ENCODE measurements at regions of chr9 and their contacts with region 1.

Region 1: DNA sequence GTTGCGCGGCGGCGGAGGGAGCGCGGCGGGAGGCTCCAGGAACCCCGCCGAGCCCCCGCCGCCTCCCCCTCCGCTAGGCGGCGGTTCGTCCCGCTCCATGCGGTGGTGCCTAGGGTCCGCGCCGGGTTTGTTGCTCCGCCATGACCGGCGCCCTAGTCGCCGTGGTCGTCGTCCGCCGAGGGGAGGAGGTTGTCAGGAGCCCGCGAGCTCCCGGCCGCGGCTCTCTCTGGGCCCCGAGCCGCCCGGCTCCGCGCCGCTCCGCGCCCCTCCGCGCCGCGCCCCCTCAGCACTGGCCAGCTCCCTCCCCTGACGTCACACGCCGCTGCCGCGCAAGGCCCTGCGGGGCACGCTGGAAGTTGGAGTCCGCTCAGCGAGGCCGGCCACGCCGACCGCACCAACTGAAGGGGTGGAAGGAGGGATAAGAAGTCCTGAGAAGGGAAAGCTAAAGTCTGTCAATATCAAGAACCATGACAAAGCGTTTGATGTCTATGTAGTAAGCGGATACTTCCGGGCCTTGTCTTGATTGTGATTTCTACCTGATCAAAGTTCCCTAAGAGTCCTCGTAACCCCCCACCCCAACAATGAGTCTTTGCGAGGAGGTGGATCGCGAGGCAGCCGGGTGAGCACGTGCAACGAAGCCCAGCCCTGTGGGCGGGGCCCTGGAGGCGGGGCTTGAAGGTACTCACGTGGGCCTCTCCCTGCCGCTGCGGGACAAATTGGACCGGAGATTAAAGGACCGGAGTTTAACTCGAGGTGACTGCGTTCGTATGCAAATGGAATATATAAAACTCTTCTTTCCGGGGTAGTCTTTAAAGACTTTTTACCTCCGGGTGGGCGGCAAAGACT is at the start of gene NR6A1:
- DNase-seq: peak; percentile 84 to 95 (median 90)
- ATAC-seq: peak; percentile 88 to 91
- H3K4me3 Mint-ChIP-seq: peak within 1 kb of the TSS; percentile 84 to 94 (median 91)
- H3K27ac Mint-ChIP-seq: peak within 1 kb of the TSS; percentile 40 to 88 (median 76)
- H3K4me1 Mint-ChIP-seq: peaks cover 23 to 46% (median 39%) of the 10 kb centered on the region in 4 donors
- H3K27me3 Mint-ChIP-seq: peaks cover 57 to 87% (median 62%) of the 10 kb centered on the region in 5 donors
- polyA plus RNA-seq, gene NR6A1: not detected

Region 2: DNA sequence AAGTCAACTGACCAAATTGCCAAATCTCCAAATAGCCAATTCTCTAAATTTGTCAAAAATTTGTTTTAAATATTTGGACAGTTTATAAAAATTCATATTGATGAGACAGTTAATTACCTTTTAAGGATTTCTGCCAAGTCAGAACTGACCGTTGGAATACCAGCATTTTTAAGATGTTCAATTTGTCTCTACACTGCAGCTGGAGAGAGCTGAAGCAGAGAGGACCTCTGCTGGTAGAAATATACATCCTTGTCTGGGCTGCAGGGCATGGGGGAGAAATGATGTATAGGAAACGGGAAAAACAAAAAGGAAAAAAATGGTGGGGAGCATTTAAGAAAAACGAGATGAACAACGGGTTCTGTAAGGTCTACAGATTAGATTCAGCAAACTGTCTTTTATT is 17.0 kb before region 1 on chr9:
- POLR2A ChIA-PET with region 1: no interaction called
- DNase-seq: no peak
- ATAC-seq: no peak
- H3K4me3 Mint-ChIP-seq: no peak overlapping the region
- H3K27ac Mint-ChIP-seq: no peak overlapping the region
- H3K4me1 Mint-ChIP-seq: peaks cover 0 to 6% (median 0%) of the 10 kb centered on the region in 4 donors
- H3K27me3 Mint-ChIP-seq: peaks cover 36 to 89% (median 62%) of the 10 kb centered on the region in 5 donors

Region 3: DNA sequence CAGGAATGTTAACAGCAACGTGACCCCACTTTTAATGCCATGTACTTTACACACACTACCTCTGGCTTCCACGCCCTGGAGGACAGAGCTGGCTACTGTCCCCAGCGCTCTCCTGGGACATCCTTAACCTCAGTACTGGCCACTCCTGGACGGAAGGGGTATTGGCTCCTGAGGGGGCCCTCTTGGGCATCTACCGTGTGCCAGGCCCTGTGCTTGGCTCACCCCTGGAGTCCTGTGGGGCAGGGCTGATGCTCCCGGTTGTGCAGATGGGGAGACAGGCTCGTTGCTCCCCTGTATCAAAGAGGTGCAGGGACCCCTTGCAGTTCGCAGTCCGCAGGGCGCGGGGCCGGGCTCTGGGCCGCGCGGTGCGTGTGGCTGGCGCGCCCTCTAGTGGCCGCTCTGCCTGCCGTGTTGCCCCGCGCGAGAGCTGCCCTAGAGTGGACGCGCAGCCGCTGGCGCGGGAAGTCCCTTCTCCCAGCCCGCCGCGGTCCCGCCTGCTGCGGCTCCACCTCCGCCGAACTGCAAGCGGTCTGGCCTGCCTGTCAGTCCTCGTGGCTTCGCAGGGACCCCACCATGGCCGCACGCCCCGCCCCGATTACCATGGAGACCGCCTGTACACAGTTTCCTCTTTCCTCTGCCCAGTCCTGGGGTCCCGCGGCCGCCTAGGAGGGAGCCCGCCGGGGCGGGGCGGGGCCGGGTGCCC is 81.7 kb after region 1 on chr9 and contains the start of gene WDR38:
- POLR2A ChIA-PET with region 1: interaction called, 11 read pairs
- DNase-seq: peak; percentile 68 to 85 (median 77)
- ATAC-seq: peak; percentile 81 to 85
- H3K4me3 Mint-ChIP-seq: peak within 1 kb of the TSS; percentile 54 to 77 (median 67)
- H3K27ac Mint-ChIP-seq: peak within 1 kb of the TSS in 6 of 10 donors; percentile 43 to 87 (median 66)
- H3K4me1 Mint-ChIP-seq: peaks cover 7 to 16% (median 12%) of the 10 kb centered on the region in 4 donors
- H3K27me3 Mint-ChIP-seq: peaks cover 0 to 16% (median 11%) of the 10 kb centered on the region in 5 donors
- polyA plus RNA-seq, gene WDR38: not detected

Region 4: DNA sequence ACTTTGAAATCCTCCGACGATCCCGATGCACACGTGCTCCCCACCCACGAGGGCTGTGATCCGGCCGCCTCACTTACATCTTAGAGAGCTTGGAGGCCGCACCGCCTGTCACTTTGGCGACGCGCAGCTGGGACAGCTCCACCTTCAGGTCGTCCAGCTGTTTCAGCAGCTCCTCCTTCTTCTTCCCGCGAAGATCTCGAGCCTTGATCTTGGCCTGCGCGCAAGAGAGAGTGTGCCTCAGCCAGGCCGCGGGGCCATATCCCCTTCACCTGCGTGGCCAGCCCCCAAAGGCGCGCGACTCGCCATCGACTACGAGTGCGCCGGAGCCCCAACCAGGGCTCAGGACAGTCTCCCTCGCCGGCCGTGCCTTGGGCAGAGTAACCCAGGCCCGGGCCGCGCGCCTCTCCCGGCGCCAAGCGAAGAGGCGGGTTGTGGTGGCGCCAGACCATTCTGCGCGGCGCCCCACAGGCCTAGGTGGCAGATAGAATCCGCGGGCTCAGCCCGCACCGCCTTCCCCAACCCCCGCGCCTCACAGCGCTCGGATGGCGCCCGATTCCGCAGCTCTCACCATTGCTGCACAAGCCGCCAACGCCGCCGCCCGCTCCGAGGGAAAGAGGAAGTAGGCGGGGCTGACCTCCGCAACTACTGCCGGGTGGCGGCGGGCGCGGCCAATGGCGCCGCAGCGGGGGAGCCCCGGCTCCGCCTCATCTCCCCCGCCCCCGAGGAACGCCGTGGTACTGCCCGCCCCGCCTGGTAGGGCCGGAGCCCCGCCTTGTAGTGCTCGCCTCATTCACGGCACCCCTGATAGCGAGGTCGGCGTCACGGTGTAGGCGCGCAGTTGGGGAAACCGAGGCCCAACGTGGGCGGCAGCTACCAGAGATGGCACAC is 90.3 kb after region 1 on chr9 and contains the starts of genes ARPC5L and RPL35:
- POLR2A ChIA-PET with region 1: interaction called, 25 read pairs
- DNase-seq: peak; percentile 91 to 97 (median 95)
- ATAC-seq: peak; percentile 94
- H3K4me3 Mint-ChIP-seq: peak within 1 kb of the TSS; percentile 89 to 99 (median 94)
- H3K27ac Mint-ChIP-seq: peak within 1 kb of the TSS; percentile 72 to 99 (median 98)
- H3K4me1 Mint-ChIP-seq: peaks cover 14 to 34% (median 32%) of the 10 kb centered on the region in 4 donors
- H3K27me3 Mint-ChIP-seq: no peaks in the 10 kb centered on the region
- polyA plus RNA-seq, gene ARPC5L: 37.5 to 70.4 (median 43.1) TPM
- polyA plus RNA-seq, gene RPL35: 1,999 to 2,475 (median 2,297) TPM

Region 5: GRCh38 chr9:124868511-124869465 is 97.5 kb after region 1 on chr9:
- POLR2A ChIA-PET with region 1: interaction called, 11 read pairs
- DNase-seq: peak; percentile 84 to 92 (median 90)
- ATAC-seq: peak; percentile 82 to 86
- H3K4me3 Mint-ChIP-seq: peak overlapping the region; percentile 84 to 95 (median 91)
- H3K27ac Mint-ChIP-seq: peak overlapping the region; percentile 83 to 98 (median 89)
- H3K4me1 Mint-ChIP-seq: peaks cover 20 to 62% (median 47%) of the 10 kb centered on the region in 4 donors
- H3K27me3 Mint-ChIP-seq: no peaks in the 10 kb centered on the region

Region 6: DNA sequence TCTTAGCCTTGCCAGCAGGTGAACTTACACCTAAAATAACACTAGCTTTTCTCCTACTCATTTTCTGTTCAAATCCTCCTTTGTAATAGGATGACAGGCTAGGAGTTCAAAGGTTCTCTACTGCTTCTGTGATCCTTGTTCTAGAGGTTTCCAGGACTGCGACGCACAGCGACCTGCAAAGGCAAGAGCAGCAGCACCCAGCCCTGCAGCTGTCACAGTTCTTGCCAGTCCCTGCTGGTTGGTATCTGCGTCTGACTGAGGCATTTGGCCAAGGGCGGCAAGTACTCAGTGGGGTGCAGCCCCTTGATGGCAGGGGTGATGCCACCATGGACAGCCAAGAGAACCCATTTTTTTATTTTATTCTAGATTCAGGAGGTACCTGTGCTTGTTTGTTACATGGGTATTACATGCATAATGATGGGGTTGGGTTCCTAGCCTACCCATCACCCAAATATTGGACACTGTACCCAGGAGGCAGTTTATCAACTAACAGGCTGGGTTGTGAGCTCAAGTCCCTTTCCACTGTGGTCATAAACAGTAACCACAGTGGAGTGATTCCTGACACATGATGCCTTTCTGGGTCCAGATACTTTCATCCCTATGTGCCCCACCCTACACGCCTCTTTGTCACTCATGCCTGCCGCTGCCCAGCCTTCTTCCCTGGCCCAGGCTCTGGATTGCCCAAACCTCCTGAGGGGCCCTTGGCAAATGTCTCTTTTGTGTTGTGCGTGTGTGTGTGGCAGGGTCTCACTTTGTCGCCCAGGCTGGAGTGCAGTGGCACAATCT is 601.4 kb after region 1 on chr9:
- POLR2A ChIA-PET with region 1: interaction called, 10 read pairs
- DNase-seq: no peak
- ATAC-seq: no peak
- H3K4me3 Mint-ChIP-seq: no peak overlapping the region
- H3K27ac Mint-ChIP-seq: no peak overlapping the region
- H3K4me1 Mint-ChIP-seq: peaks cover 2 to 10% (median 7%) of the 10 kb centered on the region in 4 donors
- H3K27me3 Mint-ChIP-seq: peaks cover 0 to 6% (median 0%) of the 10 kb centered on the region in 5 donors

Measured in naive thymus-derived CD8-positive, alpha-beta T cell (primary cell).